Activated CD4-positive, alpha-beta T cell treated with anti-CD3 and anti-CD28 coated beads for 36 hours (primary cell): ENCODE measurements at regions of chr19 and their contacts with region 1.

Region 1: DNA sequence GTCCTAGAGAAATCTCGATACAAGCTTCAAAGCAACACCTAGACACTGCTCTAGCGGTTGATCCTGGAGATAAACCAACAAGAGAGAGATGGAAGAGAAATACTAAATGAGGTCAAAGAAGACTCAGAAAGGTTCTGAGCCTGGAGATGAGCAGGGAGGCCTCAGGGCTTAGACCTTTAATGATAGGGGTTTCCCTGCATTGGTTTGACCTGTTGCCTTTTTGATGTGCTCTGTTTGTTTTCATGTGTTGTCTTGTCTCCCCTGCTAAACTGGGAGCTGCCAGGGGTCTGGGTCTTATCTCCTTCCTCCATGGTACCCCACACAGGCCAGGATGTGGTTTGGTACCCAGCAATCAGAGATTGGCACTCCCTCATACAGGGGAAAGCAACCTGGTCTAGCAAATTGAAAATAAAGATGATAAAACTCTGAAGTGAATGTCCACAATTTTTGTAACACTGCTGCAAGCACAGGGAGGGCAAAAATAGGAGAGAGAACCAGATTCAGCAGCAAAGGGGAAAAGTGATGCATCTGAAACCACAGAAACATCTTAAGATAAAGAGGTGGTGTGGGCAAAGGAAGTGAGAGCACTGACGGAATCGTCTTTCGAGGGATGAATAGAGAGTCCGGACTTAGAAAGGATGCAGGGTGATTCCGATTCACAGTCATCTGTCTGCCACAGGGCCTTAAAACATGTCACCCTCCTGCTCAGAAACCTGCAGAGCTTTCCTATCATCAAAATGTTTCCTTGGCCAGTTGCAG is 3.5 kb downstream of the FFAR2 start:
- DNase-seq: peak; percentile 43
- ATAC-seq: peak; percentile 92
- H3K4me3 Mint-ChIP-seq: no peak overlapping the region
- H3K27ac Mint-ChIP-seq: peak overlapping the region; percentile 43
- H3K4me1 Mint-ChIP-seq: peaks cover 29% of the 10 kb centered on the region
- H3K27me3 Mint-ChIP-seq: peaks cover 18% of the 10 kb centered on the region

Region 2: DNA sequence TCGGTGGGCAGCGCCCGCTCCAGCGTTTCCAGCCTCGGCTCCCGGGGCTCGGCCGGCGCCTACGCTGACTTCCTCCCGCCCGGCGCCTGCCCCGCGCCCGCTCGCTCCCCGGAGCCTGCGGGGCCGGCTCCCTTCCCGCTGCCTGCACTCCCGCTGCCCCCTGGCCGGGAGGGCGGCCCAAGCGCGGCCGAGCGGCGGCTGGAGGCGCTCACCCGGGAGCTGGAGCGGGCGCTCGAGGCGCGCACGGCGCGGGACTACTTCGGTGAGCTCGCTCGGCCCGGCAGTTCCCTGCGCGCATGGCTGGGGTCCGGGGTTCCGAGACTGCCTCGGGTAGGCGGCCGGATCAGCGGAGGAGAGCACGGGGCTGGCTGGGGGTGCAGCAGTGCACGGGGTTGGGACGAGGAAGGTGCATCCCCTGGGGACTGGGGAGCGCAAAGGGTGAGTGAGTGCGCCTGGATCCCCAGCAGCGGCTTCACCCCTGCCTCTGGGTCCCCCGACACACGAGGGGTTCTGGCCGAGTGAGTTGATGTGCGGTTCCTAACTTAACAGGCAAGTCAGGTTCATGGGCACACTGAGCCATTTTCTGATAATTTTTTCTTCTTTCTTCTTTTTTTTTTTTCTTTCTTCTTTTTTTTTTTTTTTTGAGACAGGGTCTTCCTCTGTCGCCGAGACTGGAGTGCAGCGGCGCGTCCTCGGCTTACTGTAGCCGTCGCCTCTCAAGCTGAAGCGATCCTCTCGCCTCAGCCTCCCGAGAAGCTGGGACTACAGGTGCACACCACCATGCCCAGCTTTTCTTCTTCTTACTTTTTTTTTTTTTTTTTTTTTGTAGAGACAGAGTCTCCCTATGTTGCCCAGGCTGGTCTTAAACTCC is 968.9 kb before region 1 on chr19:
- CTCF ChIA-PET with region 1: no interaction called
- POLR2A ChIA-PET with region 1: no interaction called
- intact Hi-C with region 1: no loop called
- DNase-seq: no peak
- ATAC-seq: peak; percentile 28
- H3K4me3 Mint-ChIP-seq: no peak overlapping the region
- H3K27ac Mint-ChIP-seq: no peak overlapping the region
- H3K4me1 Mint-ChIP-seq: no peaks in the 10 kb centered on the region
- H3K27me3 Mint-ChIP-seq: peaks cover 41% of the 10 kb centered on the region

Region 3: DNA sequence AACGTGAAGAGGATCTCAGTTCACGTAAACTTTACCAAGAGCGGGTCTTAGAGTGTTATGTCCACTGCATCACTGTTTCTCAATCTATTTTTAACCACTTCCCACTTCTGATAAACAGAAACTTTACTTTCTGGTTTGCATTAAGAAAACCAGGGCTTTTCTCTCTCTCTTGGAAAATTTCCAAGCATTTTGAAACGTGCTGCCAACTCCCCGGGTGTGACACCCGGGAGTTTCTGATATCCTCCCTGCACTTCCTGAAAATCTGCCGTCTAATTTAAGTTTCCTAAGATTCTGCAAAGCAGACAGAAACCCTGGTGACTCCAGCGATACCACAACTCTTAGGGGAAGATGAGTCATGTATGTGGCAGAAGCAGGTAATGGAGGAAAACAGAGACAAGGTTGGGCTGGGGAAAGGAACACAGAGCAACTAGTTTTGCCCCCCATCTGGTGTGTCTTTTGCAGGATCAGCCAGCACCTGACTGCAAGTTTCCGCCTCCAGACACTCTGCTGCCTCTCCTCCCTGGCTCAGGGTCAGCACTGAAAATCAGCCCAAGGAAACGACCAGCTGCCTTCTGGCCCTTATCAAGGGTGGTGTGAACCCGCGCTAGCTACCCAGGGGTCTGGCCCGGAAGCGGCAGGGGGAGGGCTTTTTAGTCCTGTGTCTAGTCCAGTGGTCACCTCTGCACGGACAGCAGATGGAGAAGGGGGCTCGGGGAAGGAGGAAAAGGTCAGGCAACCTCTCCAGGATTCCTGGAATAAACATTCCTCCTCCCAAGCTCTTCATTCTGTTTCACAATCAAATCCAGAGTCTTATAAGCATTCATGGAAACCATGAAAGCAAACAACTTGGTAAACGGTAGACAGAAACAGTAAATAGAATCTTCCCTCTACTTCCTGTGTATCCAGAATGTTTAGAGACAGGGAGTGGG is 14.8 kb before region 1 on chr19:
- CTCF ChIA-PET with region 1: no interaction called
- POLR2A ChIA-PET with region 1: no interaction called
- intact Hi-C with region 1: loop called (anchors 1 to 2 kb)
- DNase-seq: peak; percentile 49
- ATAC-seq: peak; percentile 95
- H3K4me3 Mint-ChIP-seq: no peak overlapping the region
- H3K27ac Mint-ChIP-seq: peak overlapping the region; percentile 67
- H3K4me1 Mint-ChIP-seq: peaks cover 13% of the 10 kb centered on the region
- H3K27me3 Mint-ChIP-seq: peaks cover 14% of the 10 kb centered on the region